OCI-LY7 (cell line): ENCODE measurements at regions of chr2 and their contacts with region 1.

Region 1: GRCh38 chr2:134411828-134412638 is 158.2 kb downstream of the MGAT5 start:
- DNase-seq: peak; percentile 97
- H3K4me3 ChIP-seq: peak overlapping the region; percentile 44
- H3K27ac ChIP-seq: peak overlapping the region; percentile 99
- H3K4me1 ChIP-seq: peaks cover 71% of the 10 kb centered on the region
- CTCF ChIP-seq: peak; percentile 95

Region 2: GRCh38 chr2:134118279-134119116 is 293.5 kb before region 1 on chr2:
- CTCF ChIA-PET with region 1: interaction called, 44 read pairs
- POLR2A ChIA-PET with region 1: interaction called, 20 read pairs
- intact Hi-C with region 1: loop called (anchors 1 kb)
- DNase-seq: peak; percentile 89
- H3K4me3 ChIP-seq: peak overlapping the region; percentile 99
- H3K27ac ChIP-seq: no peak overlapping the region
- H3K4me1 ChIP-seq: peaks cover 35% of the 10 kb centered on the region
- CTCF ChIP-seq: peak; percentile 96

Region 3: GRCh38 chr2:134253804-134254203 is 158.2 kb before region 1 on chr2 and contains the start of gene MGAT5:
- CTCF ChIA-PET with region 1: interaction called, 4 read pairs
- POLR2A ChIA-PET with region 1: interaction called, 10 read pairs
- intact Hi-C with region 1: loop called (anchors 2 kb)
- DNase-seq: peak; percentile 74
- H3K4me3 ChIP-seq: peak within 1 kb of the TSS; percentile 63
- H3K27ac ChIP-seq: peak within 1 kb of the TSS; percentile 84
- H3K4me1 ChIP-seq: peaks cover 100% of the 10 kb centered on the region
- CTCF ChIP-seq: no peak
- total RNA-seq, gene MGAT5: 39.1 and 60.8 TPM in 2 replicates

Region 4: GRCh38 chr2:134275058-134275862 is 136.8 kb before region 1 on chr2:
- CTCF ChIA-PET with region 1: interaction called, 9 read pairs
- POLR2A ChIA-PET with region 1: interaction called, 16 read pairs
- intact Hi-C with region 1: loop called (anchors 1 kb)
- DNase-seq: peak; percentile 96
- H3K4me3 ChIP-seq: peak overlapping the region; percentile 60
- H3K27ac ChIP-seq: peak overlapping the region; percentile 94
- H3K4me1 ChIP-seq: peaks cover 95% of the 10 kb centered on the region
- CTCF ChIP-seq: no peak

Region 5: DNA sequence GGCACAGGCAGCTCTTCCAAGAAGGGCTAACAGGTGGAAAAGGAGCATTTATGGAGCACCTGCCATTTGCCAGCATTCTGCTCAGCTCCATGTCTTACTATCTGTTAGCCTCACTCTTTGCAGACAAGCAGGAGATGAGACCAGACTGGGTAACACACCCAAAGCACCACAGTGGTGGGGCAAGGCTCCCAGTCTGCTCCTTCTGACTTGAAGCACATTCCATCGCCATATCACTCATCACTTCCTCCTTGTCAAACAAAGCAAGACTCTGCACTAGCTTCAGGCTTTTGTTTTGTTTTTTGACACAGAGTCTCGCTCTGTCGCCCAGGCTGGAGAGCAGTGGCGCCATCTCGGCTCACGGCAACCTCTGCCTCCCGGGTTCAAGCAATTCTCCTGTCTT is 24.7 kb after region 1 on chr2:
- CTCF ChIA-PET with region 1: no interaction called
- POLR2A ChIA-PET with region 1: no interaction called
- intact Hi-C with region 1: no loop called
- DNase-seq: no peak
- H3K4me3 ChIP-seq: no peak overlapping the region
- H3K27ac ChIP-seq: no peak overlapping the region
- H3K4me1 ChIP-seq: no peaks in the 10 kb centered on the region
- CTCF ChIP-seq: no peak

Region 6: DNA sequence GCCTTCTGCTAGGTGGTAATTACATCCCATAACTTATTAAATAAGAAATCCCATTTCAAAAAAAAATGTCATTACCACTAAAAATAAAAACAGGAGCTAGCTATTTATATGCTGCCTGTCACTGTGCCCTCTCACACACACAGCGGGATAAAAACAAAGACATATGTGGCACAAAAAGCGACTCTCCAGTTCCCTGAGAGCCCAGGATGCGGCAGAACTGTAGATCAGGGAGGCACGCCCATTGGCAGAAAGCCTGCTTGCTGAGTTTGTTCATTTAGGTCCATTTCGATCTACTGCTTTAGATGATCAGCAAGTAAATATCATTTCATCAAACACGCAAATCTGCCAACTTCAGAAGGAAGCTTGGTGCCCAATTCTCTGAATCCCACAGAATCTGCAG is 182.4 kb after region 1 on chr2:
- CTCF ChIA-PET with region 1: no interaction called
- POLR2A ChIA-PET with region 1: no interaction called
- intact Hi-C with region 1: no loop called
- DNase-seq: no peak
- H3K4me3 ChIP-seq: no peak overlapping the region
- H3K27ac ChIP-seq: no peak overlapping the region
- H3K4me1 ChIP-seq: no peaks in the 10 kb centered on the region
- CTCF ChIP-seq: no peak